Lower leg skin (tissue), 4 donors: ENCODE measurements at regions of chrX and their contacts with region 1.

Region 1: GRCh38 chrX:40784516-40785151 is 49.3 kb upstream of the MED14 start:
- DNase-seq: no peak
- H3K4me3 ChIP-seq: no peak overlapping the region
- CTCF ChIP-seq: no peak
- POLR2A ChIP-seq: no peak

Region 2: GRCh38 chrX:40603446-40603845 is 181.2 kb before region 1 on chrX:
- intact Hi-C with region 1: no loop called
- DNase-seq: no peak
- H3K4me3 ChIP-seq: no peak overlapping the region
- CTCF ChIP-seq: no peak
- POLR2A ChIP-seq: no peak

Region 3: GRCh38 chrX:40651620-40652223 is 132.9 kb before region 1 on chrX:
- intact Hi-C with region 1: loop called (anchors 5 kb)
- DNase-seq: peak; percentile 38 to 91
- H3K4me3 ChIP-seq: no peak overlapping the region
- CTCF ChIP-seq: no peak
- POLR2A ChIP-seq: no peak

Region 4: DNA sequence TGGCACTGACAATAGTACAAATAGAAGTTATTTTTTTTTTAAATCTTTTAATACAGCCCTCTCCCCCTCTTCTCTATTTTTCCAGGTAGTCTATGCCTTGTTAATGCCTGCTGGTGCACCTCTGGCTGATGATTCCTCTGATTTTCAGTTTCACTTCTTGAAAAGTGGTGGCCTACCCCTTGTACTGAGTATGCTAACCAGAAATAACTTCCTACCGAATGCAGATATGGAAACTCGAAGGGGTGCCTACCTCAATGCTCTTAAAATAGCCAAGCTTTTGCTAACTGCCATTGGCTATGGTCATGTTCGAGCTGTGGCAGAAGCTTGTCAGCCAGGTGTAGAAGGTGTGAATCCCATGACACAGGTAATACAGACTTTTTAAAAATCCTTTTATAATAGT is 399.7 kb after region 1 on chrX:
- intact Hi-C with region 1: no loop called
- DNase-seq: no peak
- H3K4me3 ChIP-seq: no peak overlapping the region
- CTCF ChIP-seq: no peak
- POLR2A ChIP-seq: no peak